GM12878 (cell line): ENCODE measurements at regions of chr17 and their contacts with region 1.

Region 1: GRCh38 chr17:12744298-12744697 is 45.0 kb upstream of the ARHGAP44 start:
- DNase-seq: no peak
- ATAC-seq: no peak
- H3K4me3 ChIP-seq: no peak overlapping the region
- H3K27ac ChIP-seq: no peak overlapping the region
- H3K4me1 ChIP-seq: no peaks in the 10 kb centered on the region
- H3K27me3 ChIP-seq: no peaks in the 10 kb centered on the region
- CTCF ChIP-seq: no peak
- EP300 ChIP-seq: no peak
- POLR2A ChIP-seq: no peak
- RAD21 ChIP-seq: no peak

Region 2: GRCh38 chr17:12180644-12181261 is 563.5 kb before region 1 on chr17:
- CTCF ChIA-PET with region 1: interaction called, 12 read pairs
- POLR2A ChIA-PET with region 1: no interaction called
- RAD21 ChIA-PET with region 1: interaction called, 6 read pairs
- SMC1A ChIA-PET with region 1: interaction called, 14 read pairs
- in situ Hi-C with region 1: no loop called
- intact Hi-C with region 1: loop called (anchors 2 kb)
- DNase-seq: peak; percentile 0
- ATAC-seq: peak; percentile 68
- H3K4me3 ChIP-seq: no peak overlapping the region
- H3K27ac ChIP-seq: no peak overlapping the region
- H3K4me1 ChIP-seq: no peaks in the 10 kb centered on the region
- H3K27me3 ChIP-seq: no peaks in the 10 kb centered on the region
- CTCF ChIP-seq: peak; percentile 58 to 81 (median 74); a peak in 5 of 6 replicates
- EP300 ChIP-seq: no peak
- POLR2A ChIP-seq: no peak
- RAD21 ChIP-seq: peak; percentile 88

Region 3: GRCh38 chr17:12250973-12251372 is 493.3 kb before region 1 on chr17:
- CTCF ChIA-PET with region 1: interaction called, 51 read pairs
- POLR2A ChIA-PET with region 1: no interaction called
- RAD21 ChIA-PET with region 1: interaction called, 12 read pairs
- SMC1A ChIA-PET with region 1: interaction called, 36 read pairs
- in situ Hi-C with region 1: loop called (anchors 5 kb)
- intact Hi-C with region 1: loop called (anchors 1 kb)
- DNase-seq: no peak
- ATAC-seq: peak; percentile 26; the same call in 2 of the 3 replicates
- H3K4me3 ChIP-seq: no peak overlapping the region
- H3K27ac ChIP-seq: no peak overlapping the region
- H3K4me1 ChIP-seq: no peaks in the 10 kb centered on the region; the same call in 1 of the 2 replicates
- H3K27me3 ChIP-seq: no peaks in the 10 kb centered on the region
- CTCF ChIP-seq: no peak
- EP300 ChIP-seq: no peak
- POLR2A ChIP-seq: no peak
- RAD21 ChIP-seq: no peak

Region 4: GRCh38 chr17:12256380-12256995 is 487.8 kb before region 1 on chr17:
- CTCF ChIA-PET with region 1: interaction called, 51 read pairs
- POLR2A ChIA-PET with region 1: no interaction called
- RAD21 ChIA-PET with region 1: interaction called, 12 read pairs
- SMC1A ChIA-PET with region 1: interaction called, 36 read pairs
- in situ Hi-C with region 1: loop called (anchors 5 kb)
- intact Hi-C with region 1: loop called (anchors 1 kb)
- DNase-seq: peak; percentile 3
- ATAC-seq: peak; percentile 76
- H3K4me3 ChIP-seq: no peak overlapping the region
- H3K27ac ChIP-seq: no peak overlapping the region
- H3K4me1 ChIP-seq: no peaks in the 10 kb centered on the region
- H3K27me3 ChIP-seq: no peaks in the 10 kb centered on the region
- CTCF ChIP-seq: peak; percentile 62 to 75 (median 69)
- EP300 ChIP-seq: no peak
- POLR2A ChIP-seq: no peak
- RAD21 ChIP-seq: peak; percentile 82

Region 5: GRCh38 chr17:12342609-12343435 is 401.5 kb before region 1 on chr17:
- CTCF ChIA-PET with region 1: interaction called, 25 read pairs
- POLR2A ChIA-PET with region 1: no interaction called
- RAD21 ChIA-PET with region 1: interaction called, 13 read pairs
- SMC1A ChIA-PET with region 1: interaction called, 10 read pairs
- in situ Hi-C with region 1: no loop called
- intact Hi-C with region 1: loop called (anchors 5 kb)
- DNase-seq: no peak
- ATAC-seq: peak; percentile 75
- H3K4me3 ChIP-seq: no peak overlapping the region
- H3K27ac ChIP-seq: no peak overlapping the region
- H3K4me1 ChIP-seq: no peaks in the 10 kb centered on the region
- H3K27me3 ChIP-seq: no peaks in the 10 kb centered on the region
- CTCF ChIP-seq: peak; percentile 44 to 58 (median 46)
- EP300 ChIP-seq: no peak
- POLR2A ChIP-seq: no peak
- RAD21 ChIP-seq: peak; percentile 69

Region 6: GRCh38 chr17:12545877-12546513 is 198.3 kb before region 1 on chr17:
- CTCF ChIA-PET with region 1: interaction called, 7 read pairs
- POLR2A ChIA-PET with region 1: no interaction called
- RAD21 ChIA-PET with region 1: no interaction called
- SMC1A ChIA-PET with region 1: interaction called, 15 read pairs
- in situ Hi-C with region 1: no loop called
- intact Hi-C with region 1: no loop called
- DNase-seq: no peak
- ATAC-seq: peak; percentile 84
- H3K4me3 ChIP-seq: no peak overlapping the region
- H3K27ac ChIP-seq: no peak overlapping the region
- H3K4me1 ChIP-seq: no peaks in the 10 kb centered on the region
- H3K27me3 ChIP-seq: no peaks in the 10 kb centered on the region
- CTCF ChIP-seq: peak; percentile 63 to 71 (median 70)
- EP300 ChIP-seq: no peak
- POLR2A ChIP-seq: no peak
- RAD21 ChIP-seq: peak; percentile 62

Region 7: GRCh38 chr17:12806630-12807029 is 62.3 kb after region 1 on chr17:
- CTCF ChIA-PET with region 1: no interaction called
- POLR2A ChIA-PET with region 1: no interaction called
- RAD21 ChIA-PET with region 1: no interaction called
- SMC1A ChIA-PET with region 1: no interaction called
- in situ Hi-C with region 1: no loop called
- intact Hi-C with region 1: no loop called
- DNase-seq: no peak
- ATAC-seq: no peak
- H3K4me3 ChIP-seq: no peak overlapping the region
- H3K27ac ChIP-seq: 0 out of 2 replicates have a peak overlapping the region, but pooled peaks have one; percentile 4
- H3K4me1 ChIP-seq: no peaks in the 10 kb centered on the region
- H3K27me3 ChIP-seq: no peaks in the 10 kb centered on the region
- CTCF ChIP-seq: no peak
- EP300 ChIP-seq: no peak
- POLR2A ChIP-seq: no peak
- RAD21 ChIP-seq: no peak

Region 8: GRCh38 chr17:13002766-13003451 is 258.6 kb after region 1 on chr17:
- CTCF ChIA-PET with region 1: interaction called, 10 read pairs
- POLR2A ChIA-PET with region 1: no interaction called
- RAD21 ChIA-PET with region 1: interaction called, 3 read pairs
- SMC1A ChIA-PET with region 1: interaction called, 4 read pairs
- in situ Hi-C with region 1: no loop called
- intact Hi-C with region 1: loop called (anchors 5 kb)
- DNase-seq: no peak
- ATAC-seq: peak; percentile 90
- H3K4me3 ChIP-seq: no peak overlapping the region
- H3K27ac ChIP-seq: no peak overlapping the region
- H3K4me1 ChIP-seq: no peaks in the 10 kb centered on the region
- H3K27me3 ChIP-seq: no peaks in the 10 kb centered on the region
- CTCF ChIP-seq: peak; percentile 72 to 84 (median 80)
- EP300 ChIP-seq: no peak
- POLR2A ChIP-seq: no peak
- RAD21 ChIP-seq: peak; percentile 90